ENCODE measurements at regions of chr3 and their contacts with region 1.

Region 1: DNA sequence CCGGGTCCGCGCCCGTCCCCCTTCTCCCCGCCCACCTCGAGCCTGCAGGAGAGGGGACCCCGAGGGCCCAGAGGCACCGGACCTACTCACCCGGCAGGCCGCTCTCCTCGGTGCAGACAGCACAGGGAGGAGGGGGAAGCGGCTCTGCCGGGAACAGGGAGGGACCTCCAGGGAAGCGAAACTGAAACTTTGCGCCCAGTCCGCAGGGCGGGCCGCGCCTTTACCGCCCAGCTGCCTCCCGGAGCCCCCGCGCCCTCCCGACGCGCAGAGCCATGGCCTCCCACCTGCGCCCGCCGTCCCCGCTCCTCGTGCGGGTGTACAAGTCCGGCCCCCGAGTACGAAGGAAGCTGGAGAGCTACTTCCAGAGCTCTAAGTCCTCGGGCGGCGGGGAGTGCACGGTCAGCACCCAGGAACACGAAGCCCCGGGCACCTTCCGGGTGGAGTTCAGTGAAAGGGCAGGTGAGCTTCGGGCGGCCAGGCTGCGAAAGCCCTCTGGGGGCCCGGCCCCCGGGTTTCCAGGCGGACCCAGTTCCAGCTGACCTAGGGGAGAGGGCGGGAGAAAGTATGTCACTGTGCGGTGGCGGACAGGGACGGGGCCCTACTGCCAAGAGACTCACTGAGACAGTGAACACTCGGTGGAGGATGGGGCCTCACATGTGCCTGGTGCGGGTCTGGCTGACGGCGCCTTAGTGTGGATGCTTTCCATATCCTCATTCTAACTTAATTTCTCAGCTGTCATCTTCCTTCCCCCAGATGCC is at the starts of genes DTX3L and PARP9:
- DNase-seq: peak; percentile 78
- ATAC-seq: peak; percentile 81
- H3K4me3 Mint-ChIP-seq: peak within 1 kb of the TSS; percentile 76
- H3K27ac Mint-ChIP-seq: peak within 1 kb of the TSS; percentile 90
- H3K4me1 Mint-ChIP-seq: peaks cover 58% of the 10 kb centered on the region
- H3K27me3 Mint-ChIP-seq: no peaks in the 10 kb centered on the region
- CTCF ChIP-seq: no peak
- total RNA-seq, gene DTX3L: 22.1 to 25.9 TPM
- total RNA-seq, gene PARP9: 17.8 to 18.5 TPM

Region 2: GRCh38 chr3:122392868-122393844 is 171.2 kb before region 1 on chr3:
- CTCF ChIA-PET with region 1: interaction called, 10 read pairs
- POLR2A ChIA-PET with region 1: no interaction called
- intact Hi-C with region 1: no loop called
- DNase-seq: no peak
- ATAC-seq: peak; percentile 63
- H3K4me3 Mint-ChIP-seq: no peak overlapping the region
- H3K27ac Mint-ChIP-seq: no peak overlapping the region
- H3K4me1 Mint-ChIP-seq: peaks cover 53% of the 10 kb centered on the region
- H3K27me3 Mint-ChIP-seq: no peaks in the 10 kb centered on the region
- CTCF ChIP-seq: peak; percentile 85

Region 3: GRCh38 chr3:122578069-122578740 is 13.9 kb after region 1 on chr3:
- CTCF ChIA-PET with region 1: interaction called, 5 read pairs
- POLR2A ChIA-PET with region 1: interaction called, 33 read pairs
- intact Hi-C with region 1: no loop called
- DNase-seq: no peak
- ATAC-seq: peak; percentile 10
- H3K4me3 Mint-ChIP-seq: peak overlapping the region; percentile 87
- H3K27ac Mint-ChIP-seq: peak overlapping the region; percentile 99
- H3K4me1 Mint-ChIP-seq: peaks cover 42% of the 10 kb centered on the region
- H3K27me3 Mint-ChIP-seq: no peaks in the 10 kb centered on the region
- CTCF ChIP-seq: no peak

Region 4: GRCh38 chr3:122668930-122669730 is 104.8 kb after region 1 on chr3:
- CTCF ChIA-PET with region 1: interaction called, 6 read pairs
- POLR2A ChIA-PET with region 1: interaction called, 12 read pairs
- intact Hi-C with region 1: no loop called
- DNase-seq: peak; percentile 60
- ATAC-seq: peak; percentile 94
- H3K4me3 Mint-ChIP-seq: no peak overlapping the region
- H3K27ac Mint-ChIP-seq: peak overlapping the region; percentile 27
- H3K4me1 Mint-ChIP-seq: peaks cover 14% of the 10 kb centered on the region
- H3K27me3 Mint-ChIP-seq: no peaks in the 10 kb centered on the region
- CTCF ChIP-seq: no peak

Region 5: GRCh38 chr3:123194552-123194951 is 630.2 kb after region 1 on chr3:
- CTCF ChIA-PET with region 1: no interaction called
- POLR2A ChIA-PET with region 1: no interaction called
- intact Hi-C with region 1: no loop called
- DNase-seq: no peak
- ATAC-seq: no peak
- H3K4me3 Mint-ChIP-seq: no peak overlapping the region
- H3K27ac Mint-ChIP-seq: no peak overlapping the region
- H3K4me1 Mint-ChIP-seq: no peaks in the 10 kb centered on the region
- H3K27me3 Mint-ChIP-seq: peaks cover 1% of the 10 kb centered on the region
- CTCF ChIP-seq: no peak

Measured in activated CD8-positive, alpha-beta T cell treated with anti-CD3 and anti-CD28 coated beads for 36 hours (primary cell).